A673 (cell line): ENCODE measurements at regions of chr11 and their contacts with region 1.

Region 1: GRCh38 chr11:39345847-39346442 is 2113.5 kb downstream of the LRRC4C start:
- DNase-seq: peak; percentile 46
- H3K4me3 ChIP-seq: no peak overlapping the region
- H3K27ac ChIP-seq: peak overlapping the region; percentile 29
- H3K4me1 ChIP-seq: peaks cover 15% of the 10 kb centered on the region
- H3K27me3 ChIP-seq: no peaks in the 10 kb centered on the region
- CTCF ChIP-seq: no peak

Region 2: DNA sequence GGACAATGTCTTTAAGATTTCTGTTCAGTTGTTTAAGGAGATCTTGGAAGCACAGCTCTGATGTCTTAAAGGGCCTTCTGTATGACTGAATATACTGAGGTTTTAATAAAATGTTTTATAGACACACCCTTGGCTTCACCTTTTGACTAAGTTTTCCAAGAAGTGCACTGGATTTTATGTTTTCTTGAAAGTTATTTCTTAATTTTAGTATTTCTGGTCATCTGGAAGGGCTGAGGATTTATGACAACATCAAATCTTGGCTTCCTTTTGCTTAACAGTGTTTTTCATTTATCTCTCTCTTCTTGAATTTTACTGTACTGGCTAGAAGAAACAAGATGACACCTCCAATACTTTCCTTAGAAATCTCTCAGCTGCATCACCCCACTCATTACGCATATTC is 309.9 kb before region 1 on chr11:
- CTCF ChIA-PET with region 1: no interaction called
- POLR2A ChIA-PET with region 1: no interaction called
- intact Hi-C with region 1: loop called (anchors 5 kb)
- DNase-seq: no peak
- H3K4me3 ChIP-seq: no peak overlapping the region
- H3K27ac ChIP-seq: no peak overlapping the region
- H3K4me1 ChIP-seq: peaks cover 19% of the 10 kb centered on the region
- H3K27me3 ChIP-seq: no peaks in the 10 kb centered on the region
- CTCF ChIP-seq: no peak